Natural killer cell (primary cell): ENCODE measurements at regions of chr17 and their contacts with region 1.

Region 1: DNA sequence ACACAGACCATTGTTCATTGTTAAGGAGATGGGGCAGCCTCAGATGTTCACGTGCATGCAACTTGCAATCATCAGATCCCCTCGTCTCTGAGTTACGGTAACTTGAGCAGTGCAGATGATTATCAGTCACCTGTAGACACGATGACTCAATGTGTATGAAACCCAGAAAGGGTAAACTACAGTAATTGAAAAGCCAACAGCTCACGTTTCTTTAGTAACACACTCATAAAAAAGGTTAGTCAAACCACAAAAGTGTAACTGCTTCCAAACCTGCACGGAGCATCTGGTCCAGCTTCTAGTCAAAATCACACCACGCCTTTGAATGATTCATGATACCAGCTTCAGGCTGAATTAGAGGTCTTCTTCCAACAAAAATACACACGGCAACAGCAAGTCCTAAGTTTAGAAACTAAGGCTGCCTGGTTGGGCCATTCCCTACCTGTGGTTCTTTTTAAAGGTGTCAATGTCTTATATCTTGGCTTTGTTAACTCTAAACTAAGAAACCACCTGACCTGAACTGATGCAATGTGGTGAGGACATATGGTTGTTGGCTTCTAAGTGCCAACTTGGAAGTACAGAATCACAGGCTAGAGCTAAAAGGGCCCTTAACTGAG is 32.3 kb downstream of the GRB7 start:
- DNase-seq: peak in 1 of 2 donors; percentile 84
- ATAC-seq: peak; percentile 44 to 57 (median 55)
- H3K4me3 ChIP-seq: no peak overlapping the region
- H3K4me3 Mint-ChIP-seq: peak overlapping the region; percentile 97
- H3K27ac ChIP-seq: peak overlapping the region; percentile 85
- H3K27ac Mint-ChIP-seq: peak overlapping the region; percentile 94 to 98
- H3K4me1 ChIP-seq: peaks cover 84% of the 10 kb centered on the region
- H3K4me1 Mint-ChIP-seq: peaks cover 97 to 99% of the 10 kb centered on the region in 2 donors
- H3K27me3 ChIP-seq: no peaks in the 10 kb centered on the region
- H3K27me3 Mint-ChIP-seq: no peaks in the 10 kb centered on the region
- CTCF ChIP-seq: no peak

Region 2: DNA sequence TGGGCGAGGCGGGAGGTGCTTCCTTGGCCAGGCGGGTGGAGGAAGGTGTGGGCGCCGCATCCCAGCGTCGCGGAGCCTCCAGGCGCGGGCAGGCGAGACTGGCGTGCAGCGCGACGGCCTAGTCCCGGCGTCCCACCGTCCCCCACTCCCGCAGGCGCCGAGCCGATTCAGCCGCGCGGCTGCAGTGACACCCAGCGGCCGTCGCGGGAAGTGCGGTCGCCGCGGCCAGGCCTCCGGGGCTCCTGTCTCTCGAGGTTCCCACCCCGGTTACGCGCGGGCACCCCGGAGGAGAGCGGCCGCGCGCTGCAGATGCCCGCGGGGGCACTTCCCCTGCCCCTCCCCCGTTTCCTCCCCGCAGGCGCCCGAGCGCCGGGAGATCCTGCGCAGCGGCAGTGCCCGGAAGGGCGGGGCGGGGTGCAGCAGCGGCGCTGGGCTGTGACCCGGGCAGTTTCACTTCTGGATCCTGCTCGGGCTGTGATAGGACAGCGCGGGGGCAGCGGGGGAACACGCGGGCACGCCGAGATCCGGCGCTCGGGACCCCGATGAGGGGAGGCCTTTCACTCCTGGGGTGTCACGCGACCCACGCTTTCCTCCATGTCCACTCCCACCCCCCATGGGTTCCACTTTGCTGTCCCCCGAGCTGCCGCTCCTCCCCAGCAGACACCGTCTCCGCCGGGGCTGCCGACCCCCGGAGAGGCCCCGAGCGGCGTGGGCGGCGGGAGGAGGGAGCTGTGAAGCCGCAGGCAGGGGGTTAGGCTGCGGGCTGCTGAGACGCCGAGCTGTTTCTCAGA is 15.7 kb before region 1 on chr17:
- intact Hi-C with region 1: loop called (anchors 1 kb)
- DNase-seq: peak; percentile 97 to 98
- ATAC-seq: peak; percentile 72 to 93 (median 79)
- H3K4me3 ChIP-seq: peak overlapping the region; percentile 47
- H3K4me3 Mint-ChIP-seq: peak overlapping the region; percentile 83
- H3K27ac ChIP-seq: peak overlapping the region; percentile 96
- H3K27ac Mint-ChIP-seq: peak overlapping the region; percentile 94 to 99
- H3K4me1 ChIP-seq: peaks cover 70% of the 10 kb centered on the region
- H3K4me1 Mint-ChIP-seq: peaks cover 57 to 58% of the 10 kb centered on the region in 2 donors
- H3K27me3 ChIP-seq: no peaks in the 10 kb centered on the region
- H3K27me3 Mint-ChIP-seq: no peaks in the 10 kb centered on the region
- CTCF ChIP-seq: peak; percentile 87

Region 3: DNA sequence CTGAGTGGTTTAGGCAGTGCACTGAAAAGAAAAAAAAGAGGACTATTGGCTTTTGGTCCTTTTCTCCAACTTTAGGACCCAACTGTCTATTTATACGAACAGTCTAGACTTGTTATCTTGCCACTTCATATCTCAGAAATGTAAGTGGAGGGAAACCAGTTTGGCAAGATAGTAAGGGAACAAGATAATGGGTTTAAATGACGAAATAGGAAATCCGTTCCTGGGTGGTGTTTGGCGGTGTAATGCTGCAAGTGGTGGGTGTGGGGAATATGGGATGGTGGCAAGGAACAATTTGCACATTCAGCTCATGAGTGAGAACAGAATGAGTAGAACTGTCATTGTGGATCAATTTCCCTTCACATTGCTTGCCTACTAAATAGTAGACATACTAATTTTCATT is 12.4 kb after region 1 on chr17:
- intact Hi-C with region 1: loop called (anchors 2 kb)
- DNase-seq: no peak
- ATAC-seq: peak in 1 of 3 donors; percentile 42
- H3K4me3 ChIP-seq: no peak overlapping the region
- H3K4me3 Mint-ChIP-seq: peak overlapping the region; percentile 57
- H3K27ac ChIP-seq: peak overlapping the region; percentile 36
- H3K27ac Mint-ChIP-seq: peak overlapping the region; percentile 84 to 88
- H3K4me1 ChIP-seq: peaks cover 41% of the 10 kb centered on the region
- H3K4me1 Mint-ChIP-seq: peaks cover 61 to 74% of the 10 kb centered on the region in 2 donors
- H3K27me3 ChIP-seq: no peaks in the 10 kb centered on the region
- H3K27me3 Mint-ChIP-seq: no peaks in the 10 kb centered on the region
- CTCF ChIP-seq: no peak

Region 4: GRCh38 chr17:39813631-39814030 is 43.5 kb after region 1 on chr17:
- intact Hi-C with region 1: loop called (anchors 2 kb)
- DNase-seq: peak; percentile 52 to 94
- ATAC-seq: peak; percentile 89 to 96 (median 95)
- H3K4me3 ChIP-seq: no peak overlapping the region
- H3K4me3 Mint-ChIP-seq: peak overlapping the region; percentile 86
- H3K27ac ChIP-seq: peak overlapping the region; percentile 71
- H3K27ac Mint-ChIP-seq: peak overlapping the region; percentile 91 to 95
- H3K4me1 ChIP-seq: peaks cover 25% of the 10 kb centered on the region
- H3K4me1 Mint-ChIP-seq: peaks cover 58 to 60% of the 10 kb centered on the region in 2 donors
- H3K27me3 ChIP-seq: no peaks in the 10 kb centered on the region
- H3K27me3 Mint-ChIP-seq: no peaks in the 10 kb centered on the region
- CTCF ChIP-seq: no peak

Region 5: GRCh38 chr17:39863918-39864746 is 94.1 kb after region 1 on chr17 and contains the start of gene IKZF3:
- intact Hi-C with region 1: loop called (anchors 5 kb)
- DNase-seq: peak; percentile 81 to 95
- ATAC-seq: peak; percentile 89 to 94 (median 92)
- H3K4me3 ChIP-seq: peak within 1 kb of the TSS; percentile 95
- H3K4me3 Mint-ChIP-seq: peak within 1 kb of the TSS; percentile 98
- H3K27ac ChIP-seq: peak within 1 kb of the TSS; percentile 97
- H3K27ac Mint-ChIP-seq: peak within 1 kb of the TSS; percentile 91 to 99
- H3K4me1 ChIP-seq: peaks cover 24% of the 10 kb centered on the region
- H3K4me1 Mint-ChIP-seq: peaks cover 52 to 57% of the 10 kb centered on the region in 2 donors
- H3K27me3 ChIP-seq: peaks cover 3% of the 10 kb centered on the region
- H3K27me3 Mint-ChIP-seq: peaks cover 0 to 4% of the 10 kb centered on the region in 2 donors
- CTCF ChIP-seq: peak; percentile 49
- total RNA-seq, gene IKZF3: 134 to 162 (median 139) TPM

Region 6: GRCh38 chr17:40098846-40099618 is 329.0 kb after region 1 on chr17:
- intact Hi-C with region 1: loop called (anchors 10 kb)
- DNase-seq: peak; percentile 98 to 99
- ATAC-seq: peak; percentile 65 to 83 (median 70)
- H3K4me3 ChIP-seq: peak overlapping the region; percentile 55
- H3K4me3 Mint-ChIP-seq: peak overlapping the region; percentile 98
- H3K27ac ChIP-seq: peak overlapping the region; percentile 90
- H3K27ac Mint-ChIP-seq: peak overlapping the region; percentile 94 to 96
- H3K4me1 ChIP-seq: peaks cover 87% of the 10 kb centered on the region
- H3K4me1 Mint-ChIP-seq: peaks cover 67 to 75% of the 10 kb centered on the region in 2 donors
- H3K27me3 ChIP-seq: no peaks in the 10 kb centered on the region
- H3K27me3 Mint-ChIP-seq: no peaks in the 10 kb centered on the region
- CTCF ChIP-seq: no peak

Region 7: DNA sequence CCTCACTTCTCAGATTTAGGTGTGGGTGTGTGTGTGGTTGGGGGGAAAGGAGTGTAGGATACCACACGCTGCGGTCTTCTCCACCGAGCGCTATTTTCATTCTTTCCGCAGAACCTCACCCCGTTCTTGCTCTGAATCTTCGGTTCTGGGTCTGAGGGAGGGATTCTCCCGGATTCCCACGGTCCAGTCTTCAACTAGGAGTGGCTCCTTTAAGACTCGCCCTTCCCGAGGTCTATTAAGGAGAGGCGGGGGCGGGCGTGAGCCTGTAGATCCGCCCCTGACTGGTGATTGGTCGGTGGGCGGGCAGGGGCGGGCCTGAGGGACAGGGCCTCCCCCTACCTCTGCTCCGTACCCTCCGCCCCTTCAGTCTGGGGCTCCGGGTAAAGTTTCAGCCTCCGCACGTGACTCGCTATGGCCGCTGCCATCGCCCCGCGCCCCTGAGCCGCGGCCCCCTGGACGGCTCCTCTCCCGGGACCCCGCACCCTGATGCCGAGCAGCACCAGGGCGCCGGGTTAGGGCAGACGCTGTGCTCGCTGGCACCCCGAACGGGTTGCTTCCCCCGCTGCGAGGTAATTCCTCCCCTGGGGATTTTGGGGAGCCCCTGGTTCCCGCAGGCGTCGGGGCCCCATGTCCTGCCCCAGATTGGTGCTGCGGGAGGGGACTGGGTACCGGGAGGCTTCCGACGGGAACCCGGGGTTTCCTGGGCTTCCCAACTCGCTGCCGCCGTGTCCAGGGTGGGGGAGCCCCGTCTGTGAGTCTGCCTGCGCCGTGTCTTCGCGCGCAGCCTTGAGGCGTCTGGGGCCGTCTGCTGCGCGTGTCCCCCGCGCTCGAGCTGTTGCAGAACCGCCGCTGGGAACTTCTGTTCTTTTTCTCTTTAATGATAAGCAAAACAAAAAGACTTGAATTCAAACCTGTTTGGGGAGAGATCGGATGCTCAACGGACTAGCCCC is 548.1 kb after region 1 on chr17:
- intact Hi-C with region 1: loop called (anchors 5 kb)
- DNase-seq: peak; percentile 89 to 95
- ATAC-seq: peak; percentile 61 to 86 (median 71)
- H3K4me3 ChIP-seq: peak overlapping the region; percentile 79
- H3K4me3 Mint-ChIP-seq: peak overlapping the region; percentile 94
- H3K27ac ChIP-seq: peak overlapping the region; percentile 98
- H3K27ac Mint-ChIP-seq: peak overlapping the region; percentile 99
- H3K4me1 ChIP-seq: peaks cover 94% of the 10 kb centered on the region
- H3K4me1 Mint-ChIP-seq: peaks cover 78 to 95% of the 10 kb centered on the region in 2 donors
- H3K27me3 ChIP-seq: no peaks in the 10 kb centered on the region
- H3K27me3 Mint-ChIP-seq: no peaks in the 10 kb centered on the region
- CTCF ChIP-seq: no peak